CD8-positive, alpha-beta T cell (primary cell): ENCODE measurements at regions of chr10 and their contacts with region 1.

Region 1: DNA sequence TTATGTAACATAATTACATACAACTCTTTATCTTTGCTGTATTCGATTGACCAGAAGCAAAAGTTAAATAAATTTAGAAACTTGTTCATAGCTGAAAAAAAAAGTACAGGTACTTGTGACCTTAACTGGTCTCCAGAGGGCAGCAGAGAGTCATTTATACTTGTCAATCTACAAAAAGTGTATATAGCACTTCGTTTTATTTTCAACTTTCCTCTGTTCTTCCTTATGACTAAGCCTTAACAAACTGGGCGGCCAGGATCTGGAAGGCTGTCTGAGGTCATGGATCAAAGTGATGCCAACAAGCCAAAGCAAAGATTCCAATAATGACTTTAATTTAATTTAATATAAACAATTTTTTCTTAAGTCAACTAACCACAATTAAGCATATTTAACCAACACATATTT is 29.8 kb downstream of the C10orf67 start:
- DNase-seq: peak in 7 of 9 experiments; percentile 26 to 78 (median 46)
- ATAC-seq: no peak
- H3K4me3 ChIP-seq: no peak overlapping the region
- H3K4me3 Mint-ChIP-seq: no peak overlapping the region
- H3K27ac ChIP-seq: no peak overlapping the region
- H3K27ac Mint-ChIP-seq: no peak overlapping the region
- H3K4me1 ChIP-seq: no peaks in the 10 kb centered on the region
- H3K4me1 Mint-ChIP-seq: no peaks in the 10 kb centered on the region
- H3K27me3 ChIP-seq: no peaks in the 10 kb centered on the region
- H3K27me3 Mint-ChIP-seq: peaks cover 3% of the 10 kb centered on the region
- CTCF ChIP-seq: peak; percentile 97

Region 2: DNA sequence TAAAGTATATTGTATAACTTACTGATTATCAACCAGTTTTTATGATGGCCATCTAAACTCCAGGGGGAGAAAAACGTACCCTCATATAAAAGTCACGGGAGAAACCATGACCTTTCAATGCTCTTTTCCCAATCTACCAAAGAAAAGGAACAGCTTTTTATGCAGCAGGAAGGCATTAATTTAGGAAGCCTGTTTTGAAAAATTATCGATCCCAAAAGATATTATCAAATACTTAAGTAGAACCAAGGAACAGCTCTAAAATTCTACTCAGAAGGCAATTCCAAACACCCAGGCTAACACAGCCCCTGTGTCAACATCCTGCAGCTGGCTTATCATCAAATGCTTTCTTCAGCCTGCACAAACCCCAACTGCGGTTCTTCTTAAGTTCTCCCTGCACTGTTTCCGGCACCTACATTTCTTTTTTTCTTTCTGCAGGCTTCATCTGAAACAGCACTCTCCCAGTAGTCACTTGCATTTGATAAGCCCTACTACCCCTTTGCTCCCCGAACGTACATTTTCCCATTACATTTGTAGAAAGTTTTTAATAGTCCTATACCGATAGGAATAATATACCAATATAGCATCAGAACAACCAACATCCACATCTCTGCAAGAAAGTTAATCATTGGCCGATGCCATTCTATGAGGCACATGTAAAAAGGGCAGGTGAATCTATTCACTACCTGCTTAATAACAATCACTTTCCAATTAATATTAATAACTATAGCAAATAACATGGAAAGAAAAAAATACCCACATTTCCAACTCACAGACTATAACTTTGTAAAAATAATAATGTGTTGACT is 648.3 kb before region 1 on chr10:
- CTCF ChIA-PET with region 1: no interaction called
- POLR2A ChIA-PET with region 1: no interaction called
- intact Hi-C with region 1: no loop called
- DNase-seq: peak; percentile 30 to 92 (median 67)
- ATAC-seq: peak; percentile 84
- H3K4me3 ChIP-seq: peak overlapping the region; percentile 29 to 42
- H3K4me3 Mint-ChIP-seq: peak overlapping the region; percentile 79
- H3K27ac ChIP-seq: peak overlapping the region; percentile 41 to 67
- H3K27ac Mint-ChIP-seq: peak overlapping the region; percentile 90
- H3K4me1 ChIP-seq: peaks cover 87% of the 10 kb centered on the region
- H3K4me1 Mint-ChIP-seq: peaks cover 83% of the 10 kb centered on the region
- H3K27me3 ChIP-seq: no peaks in the 10 kb centered on the region
- H3K27me3 Mint-ChIP-seq: no peaks in the 10 kb centered on the region
- CTCF ChIP-seq: no peak

Region 3: GRCh38 chr10:23146258-23146657 is 168.6 kb before region 1 on chr10:
- CTCF ChIA-PET with region 1: no interaction called
- POLR2A ChIA-PET with region 1: no interaction called
- intact Hi-C with region 1: no loop called
- DNase-seq: no peak
- ATAC-seq: no peak
- H3K4me3 ChIP-seq: no peak overlapping the region
- H3K4me3 Mint-ChIP-seq: no peak overlapping the region
- H3K27ac ChIP-seq: no peak overlapping the region
- H3K27ac Mint-ChIP-seq: no peak overlapping the region
- H3K4me1 ChIP-seq: no peaks in the 10 kb centered on the region
- H3K4me1 Mint-ChIP-seq: no peaks in the 10 kb centered on the region
- H3K27me3 ChIP-seq: no peaks in the 10 kb centered on the region
- H3K27me3 Mint-ChIP-seq: peaks cover 12% of the 10 kb centered on the region
- CTCF ChIP-seq: no peak

Region 4: GRCh38 chr10:23325132-23325531 is 10.3 kb after region 1 on chr10:
- CTCF ChIA-PET with region 1: interaction called, 11 read pairs
- POLR2A ChIA-PET with region 1: no interaction called
- intact Hi-C with region 1: no loop called
- DNase-seq: no peak
- ATAC-seq: no peak
- H3K4me3 ChIP-seq: no peak overlapping the region
- H3K4me3 Mint-ChIP-seq: no peak overlapping the region
- H3K27ac ChIP-seq: no peak overlapping the region
- H3K27ac Mint-ChIP-seq: no peak overlapping the region
- H3K4me1 ChIP-seq: no peaks in the 10 kb centered on the region
- H3K4me1 Mint-ChIP-seq: no peaks in the 10 kb centered on the region
- H3K27me3 ChIP-seq: no peaks in the 10 kb centered on the region
- H3K27me3 Mint-ChIP-seq: peaks cover 14% of the 10 kb centered on the region
- CTCF ChIP-seq: no peak

Region 5: DNA sequence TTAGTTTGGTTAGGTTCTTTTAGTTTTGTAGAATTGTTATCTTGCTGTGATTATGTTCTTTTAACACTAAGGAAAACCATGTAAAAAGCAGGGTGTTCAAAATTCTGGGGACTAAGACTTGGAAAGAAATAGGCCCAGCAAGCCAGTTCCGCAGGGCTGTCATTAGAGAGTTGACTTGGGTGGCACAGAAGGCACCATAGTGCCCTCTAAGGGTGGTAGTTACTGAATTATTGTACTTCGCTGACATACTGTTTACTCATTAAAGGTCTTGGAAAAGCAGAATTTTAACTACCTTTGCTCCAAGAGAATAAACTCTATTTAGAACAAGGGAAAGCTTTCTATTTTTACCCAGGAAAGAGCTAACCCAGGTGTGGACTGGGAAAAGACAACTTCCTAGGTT is 210.6 kb after region 1 on chr10:
- CTCF ChIA-PET with region 1: interaction called, 51 read pairs
- POLR2A ChIA-PET with region 1: no interaction called
- intact Hi-C with region 1: loop called (anchors 1 kb)
- DNase-seq: peak in 2 of 9 experiments; percentile 27 to 39
- ATAC-seq: no peak
- H3K4me3 ChIP-seq: no peak overlapping the region
- H3K4me3 Mint-ChIP-seq: no peak overlapping the region
- H3K27ac ChIP-seq: no peak overlapping the region
- H3K27ac Mint-ChIP-seq: no peak overlapping the region
- H3K4me1 ChIP-seq: no peaks in the 10 kb centered on the region
- H3K4me1 Mint-ChIP-seq: no peaks in the 10 kb centered on the region
- H3K27me3 ChIP-seq: no peaks in the 10 kb centered on the region
- H3K27me3 Mint-ChIP-seq: no peaks in the 10 kb centered on the region
- CTCF ChIP-seq: peak; percentile 15

Region 6: DNA sequence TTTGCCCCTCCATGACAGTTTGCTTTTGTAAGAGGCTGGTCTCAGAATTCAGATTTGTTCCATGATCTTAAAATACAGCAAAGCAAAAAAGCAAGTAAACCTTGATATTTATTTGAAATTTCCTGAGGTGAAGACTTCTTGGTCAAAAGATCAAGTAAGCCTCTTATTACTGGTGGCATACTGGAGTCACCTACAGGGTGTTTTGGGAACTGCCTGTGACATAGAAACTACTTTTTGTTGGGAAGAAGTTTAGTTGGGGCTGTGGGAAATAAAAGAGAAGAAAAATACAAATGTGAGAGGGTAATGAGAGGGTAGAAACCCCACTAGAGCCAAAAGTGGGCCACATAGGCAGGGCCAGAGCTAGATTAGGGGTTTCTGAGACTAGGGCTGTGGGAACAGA is 341.9 kb after region 1 on chr10:
- CTCF ChIA-PET with region 1: interaction called, 36 read pairs
- POLR2A ChIA-PET with region 1: interaction called, 3 read pairs
- intact Hi-C with region 1: loop called (anchors 1 to 2 kb)
- DNase-seq: peak in 2 of 9 experiments; percentile 9 to 26
- ATAC-seq: no peak
- H3K4me3 ChIP-seq: no peak overlapping the region
- H3K4me3 Mint-ChIP-seq: no peak overlapping the region
- H3K27ac ChIP-seq: no peak overlapping the region
- H3K27ac Mint-ChIP-seq: no peak overlapping the region
- H3K4me1 ChIP-seq: no peaks in the 10 kb centered on the region
- H3K4me1 Mint-ChIP-seq: no peaks in the 10 kb centered on the region
- H3K27me3 ChIP-seq: no peaks in the 10 kb centered on the region
- H3K27me3 Mint-ChIP-seq: no peaks in the 10 kb centered on the region
- CTCF ChIP-seq: peak; percentile 35

Region 7: GRCh38 chr10:24201503-24202180 is 886.8 kb after region 1 on chr10:
- CTCF ChIA-PET with region 1: interaction called, 39 read pairs
- POLR2A ChIA-PET with region 1: no interaction called
- intact Hi-C with region 1: loop called in 1 of 2 experiments (anchors 1 kb)
- DNase-seq: no peak
- ATAC-seq: no peak
- H3K4me3 ChIP-seq: no peak overlapping the region
- H3K4me3 Mint-ChIP-seq: no peak overlapping the region
- H3K27ac ChIP-seq: no peak overlapping the region
- H3K27ac Mint-ChIP-seq: no peak overlapping the region
- H3K4me1 ChIP-seq: no peaks in the 10 kb centered on the region
- H3K4me1 Mint-ChIP-seq: no peaks in the 10 kb centered on the region
- H3K27me3 ChIP-seq: no peaks in the 10 kb centered on the region
- H3K27me3 Mint-ChIP-seq: peaks cover 6% of the 10 kb centered on the region
- CTCF ChIP-seq: no peak

Region 8: GRCh38 chr10:24556750-24557742 is 1242.2 kb after region 1 on chr10:
- CTCF ChIA-PET with region 1: interaction called, 5 read pairs
- POLR2A ChIA-PET with region 1: no interaction called
- intact Hi-C with region 1: loop called in 1 of 2 experiments (anchors 5 kb)
- DNase-seq: peak in 3 of 9 experiments; percentile 8 to 53 (median 53)
- ATAC-seq: no peak
- H3K4me3 ChIP-seq: no peak overlapping the region
- H3K4me3 Mint-ChIP-seq: no peak overlapping the region
- H3K27ac ChIP-seq: no peak overlapping the region
- H3K27ac Mint-ChIP-seq: no peak overlapping the region
- H3K4me1 ChIP-seq: peaks cover 3% of the 10 kb centered on the region
- H3K4me1 Mint-ChIP-seq: peaks cover 7% of the 10 kb centered on the region
- H3K27me3 ChIP-seq: no peaks in the 10 kb centered on the region
- H3K27me3 Mint-ChIP-seq: peaks cover 2% of the 10 kb centered on the region
- CTCF ChIP-seq: peak; percentile 64